OCI-LY7 (cell line): ENCODE measurements at regions of chr11 and their contacts with region 1.

Region 1: DNA sequence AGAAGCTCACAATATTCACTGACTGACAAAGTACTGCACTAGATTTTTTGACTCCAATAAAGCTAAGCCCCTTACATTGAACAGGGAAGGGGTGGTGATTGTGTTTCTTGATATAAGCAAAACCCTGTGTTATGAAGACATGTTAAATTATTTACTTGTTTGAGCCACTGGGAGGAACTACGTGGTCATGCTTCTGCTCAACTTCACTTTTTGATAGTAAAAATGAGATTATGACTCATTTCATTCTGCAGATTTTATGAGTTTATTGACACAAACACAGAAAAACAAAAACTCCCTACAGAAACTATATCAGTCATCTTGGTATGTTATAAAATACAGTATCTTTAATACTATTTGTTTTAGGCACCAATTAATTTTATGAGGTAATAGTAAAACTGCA is 124.7 kb downstream of the CADM1 start:
- DNase-seq: no peak
- H3K4me3 ChIP-seq: no peak overlapping the region
- H3K27ac ChIP-seq: no peak overlapping the region
- H3K4me1 ChIP-seq: peaks cover 8% of the 10 kb centered on the region
- CTCF ChIP-seq: no peak

Region 2: GRCh38 chr11:115324581-115325432 is 54.7 kb before region 1 on chr11:
- CTCF ChIA-PET with region 1: no interaction called
- POLR2A ChIA-PET with region 1: no interaction called
- intact Hi-C with region 1: no loop called
- DNase-seq: peak; percentile 79
- H3K4me3 ChIP-seq: no peak overlapping the region
- H3K27ac ChIP-seq: no peak overlapping the region
- H3K4me1 ChIP-seq: no peaks in the 10 kb centered on the region
- CTCF ChIP-seq: peak; percentile 92

Region 3: DNA sequence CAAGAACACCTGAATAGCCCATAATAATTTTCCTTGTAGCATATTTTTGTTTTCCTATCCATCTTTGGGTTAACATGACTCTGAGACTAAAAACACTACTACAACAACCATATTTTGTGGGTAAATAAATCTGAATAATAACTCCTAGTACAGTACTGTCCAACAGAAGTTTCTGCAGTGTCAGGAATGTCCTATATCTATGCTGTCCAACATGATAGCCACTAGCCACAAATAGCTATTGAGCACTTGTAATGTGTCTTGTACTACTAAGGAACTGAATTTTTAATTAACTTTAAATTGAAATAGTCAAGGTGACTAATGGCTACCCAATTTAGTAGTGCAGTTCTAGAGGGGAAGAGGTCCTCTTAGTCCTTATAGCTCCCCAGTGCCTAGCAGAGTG is 10.9 kb before region 1 on chr11:
- CTCF ChIA-PET with region 1: no interaction called
- POLR2A ChIA-PET with region 1: interaction called, 10 read pairs
- intact Hi-C with region 1: no loop called
- DNase-seq: no peak
- H3K4me3 ChIP-seq: no peak overlapping the region
- H3K27ac ChIP-seq: no peak overlapping the region
- H3K4me1 ChIP-seq: peaks cover 10% of the 10 kb centered on the region
- CTCF ChIP-seq: no peak

Region 4: GRCh38 chr11:116052603-116053547 is 673.3 kb after region 1 on chr11:
- CTCF ChIA-PET with region 1: no interaction called
- POLR2A ChIA-PET with region 1: no interaction called
- intact Hi-C with region 1: no loop called
- DNase-seq: no peak
- H3K4me3 ChIP-seq: no peak overlapping the region
- H3K27ac ChIP-seq: no peak overlapping the region
- H3K4me1 ChIP-seq: no peaks in the 10 kb centered on the region
- CTCF ChIP-seq: no peak